Posterior cingulate gyrus (tissue), 11 donors: ENCODE measurements at regions of chr17 and their contacts with region 1.

Region 1: DNA sequence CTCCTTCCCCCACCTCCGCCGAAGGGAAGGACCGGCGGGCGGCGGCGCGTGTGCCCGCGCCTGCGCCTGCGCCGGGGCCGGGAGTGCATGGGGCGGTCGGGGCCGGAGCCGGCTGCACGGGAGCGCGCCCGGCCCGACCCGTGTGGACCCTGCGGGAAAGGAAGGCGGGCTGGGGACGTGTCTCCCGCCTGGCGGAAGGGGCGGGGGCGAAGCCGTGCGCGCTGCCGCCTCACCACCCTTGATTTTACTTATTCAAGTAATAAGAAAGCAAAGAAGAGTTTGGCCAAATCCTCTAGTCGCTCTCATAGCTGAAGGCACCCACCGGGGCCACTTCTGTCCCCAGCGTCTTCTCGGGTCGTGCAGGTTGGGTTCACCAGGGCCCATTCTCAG is 596 bp upstream of the PFN1 start:
- DNase-seq: peak; percentile 55 to 96 (median 69)

Region 2: DNA sequence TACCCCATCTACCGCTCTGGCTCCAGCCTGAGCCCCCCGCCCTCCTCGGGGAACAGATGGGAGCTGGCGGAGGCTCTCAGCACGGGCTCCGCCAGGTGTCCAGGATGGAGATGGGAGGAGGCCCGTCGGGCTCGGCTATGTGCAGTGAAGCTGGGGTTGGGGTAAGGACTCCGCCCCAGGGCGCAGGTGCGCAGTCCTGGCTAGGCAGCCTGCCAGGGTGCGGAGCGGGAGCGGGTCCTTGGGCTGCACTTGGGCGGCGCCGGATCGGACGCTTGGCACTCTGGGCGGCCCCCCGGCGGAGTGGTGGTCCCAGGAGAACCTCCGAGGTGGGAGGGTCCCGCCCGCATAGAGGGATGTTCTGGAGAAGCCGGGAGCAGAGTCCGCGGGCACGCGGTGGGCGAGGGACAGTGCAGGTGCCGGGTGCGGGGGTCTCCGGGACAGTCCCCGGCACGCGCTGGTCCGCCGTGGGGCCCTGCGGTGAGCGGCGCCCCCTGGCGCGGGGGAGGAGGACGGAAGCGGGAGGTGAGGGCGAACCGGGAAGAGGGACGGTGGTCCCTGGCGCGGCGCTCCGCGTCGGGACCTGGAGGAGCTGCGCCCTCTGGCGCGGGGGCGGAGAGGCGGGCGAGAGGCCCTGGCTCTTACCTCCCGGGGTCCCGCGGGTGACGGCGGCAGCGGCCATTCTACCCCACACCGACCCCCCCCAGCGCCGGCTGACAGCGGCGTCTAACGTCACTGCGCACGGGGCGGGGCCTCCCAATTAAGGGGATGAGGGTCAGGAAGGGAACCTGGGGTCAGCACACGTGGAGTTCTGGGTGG is 38.2 kb after region 1 on chr17 and contains the start of gene CAMTA2:
- intact Hi-C with region 1: loop called (anchors 5 kb)
- DNase-seq: peak; percentile 82 to 98 (median 90)